ENCODE measurements at regions of chr4 and their contacts with region 1.

Region 1: DNA sequence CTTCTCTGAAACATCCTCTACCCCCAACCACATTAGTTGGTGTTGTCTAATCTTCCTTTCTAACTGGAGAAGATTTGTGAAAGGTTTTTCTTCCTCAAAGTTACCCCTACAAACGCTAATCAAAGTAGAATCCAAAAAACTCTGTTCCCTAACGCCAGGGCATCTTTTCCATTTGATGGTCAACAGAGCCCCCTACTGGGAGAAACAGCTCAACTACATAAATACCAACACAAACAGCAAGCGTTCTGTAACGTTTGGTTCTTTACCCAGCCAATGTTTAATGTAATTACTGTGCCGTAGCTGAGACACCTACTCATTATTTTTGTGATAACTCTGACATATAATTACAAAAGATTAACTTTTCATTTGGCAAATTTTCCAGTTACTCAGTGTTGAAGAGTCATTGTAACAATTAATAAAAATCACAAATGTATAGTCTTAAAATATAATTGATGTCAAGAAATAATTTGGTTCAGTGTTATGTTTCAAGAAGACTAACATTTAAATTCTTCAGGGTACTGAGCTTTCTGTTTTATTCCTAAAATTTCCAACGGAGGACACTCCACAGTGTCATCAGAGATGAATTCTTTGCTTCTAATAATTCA is 94.9 kb upstream of the TBC1D9 start:
- DNase-seq: peak; percentile 83
- ATAC-seq: peak; percentile 82
- H3K4me3 ChIP-seq: no peak overlapping the region
- H3K27ac ChIP-seq: no peak overlapping the region
- H3K4me1 ChIP-seq: no peaks in the 10 kb centered on the region
- H3K27me3 ChIP-seq: no peaks in the 10 kb centered on the region
- CTCF ChIP-seq: peak; percentile 98

Region 2: GRCh38 chr4:140359562-140360427 is 491.3 kb before region 1 on chr4:
- CTCF ChIA-PET with region 1: interaction called, 3 read pairs
- POLR2A ChIA-PET with region 1: no interaction called
- intact Hi-C with region 1: loop called (anchors 2 kb)
- DNase-seq: peak; percentile 86
- ATAC-seq: peak; percentile 95
- H3K4me3 ChIP-seq: no peak overlapping the region
- H3K27ac ChIP-seq: no peak overlapping the region
- H3K4me1 ChIP-seq: no peaks in the 10 kb centered on the region
- H3K27me3 ChIP-seq: no peaks in the 10 kb centered on the region
- CTCF ChIP-seq: peak; percentile 89

Region 3: GRCh38 chr4:140595065-140595464 is 256.1 kb before region 1 on chr4:
- CTCF ChIA-PET with region 1: interaction called, 3 read pairs
- POLR2A ChIA-PET with region 1: no interaction called
- intact Hi-C with region 1: loop called (anchors 1 kb)
- DNase-seq: peak; percentile 61
- ATAC-seq: peak; percentile 96
- H3K4me3 ChIP-seq: no peak overlapping the region
- H3K27ac ChIP-seq: no peak overlapping the region
- H3K4me1 ChIP-seq: no peaks in the 10 kb centered on the region
- H3K27me3 ChIP-seq: peaks cover 12% of the 10 kb centered on the region; the same call in 1 of the 2 replicates
- CTCF ChIP-seq: peak; percentile 66

Region 4: DNA sequence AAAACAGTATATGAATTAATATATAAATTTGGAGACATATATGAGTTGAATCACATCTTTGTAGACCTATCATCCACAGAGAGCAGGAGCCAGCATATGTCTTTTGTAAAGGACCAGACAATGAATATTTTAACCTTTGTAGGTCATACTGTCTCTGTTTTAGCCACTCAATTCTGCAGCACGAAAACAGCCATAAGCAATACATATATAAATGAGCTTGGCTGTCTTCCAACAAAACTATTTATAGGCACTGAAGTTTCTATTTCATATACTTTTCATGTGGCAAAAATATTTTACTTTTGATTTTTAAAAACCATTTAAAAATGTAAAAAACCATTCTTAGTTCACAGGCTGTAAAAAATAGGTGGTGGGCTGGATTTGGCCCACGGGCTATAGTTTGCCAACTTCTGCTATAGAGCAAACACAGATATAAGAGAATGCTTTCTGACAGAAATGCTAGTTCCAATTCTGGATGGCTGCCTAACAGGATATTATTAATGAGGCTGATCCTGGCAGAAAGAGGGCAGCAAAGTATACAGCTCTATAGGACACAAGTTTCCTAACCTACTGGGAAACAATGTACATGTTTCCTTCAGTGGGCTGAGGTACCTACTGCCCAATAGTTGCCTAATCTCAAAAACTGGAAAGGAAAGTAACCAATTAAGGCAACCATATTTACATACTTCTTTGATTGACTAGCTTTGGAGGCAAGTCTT is 224.3 kb before region 1 on chr4:
- CTCF ChIA-PET with region 1: interaction called, 3 read pairs
- POLR2A ChIA-PET with region 1: no interaction called
- intact Hi-C with region 1: loop called (anchors 2 kb)
- DNase-seq: peak; percentile 22
- ATAC-seq: peak; percentile 22; the same call in 1 of the 2 replicates
- H3K4me3 ChIP-seq: no peak overlapping the region
- H3K27ac ChIP-seq: no peak overlapping the region
- H3K4me1 ChIP-seq: peaks cover 14% of the 10 kb centered on the region
- H3K27me3 ChIP-seq: no peaks in the 10 kb centered on the region
- CTCF ChIP-seq: peak; percentile 13; the same call in 1 of the 2 replicates

Region 5: GRCh38 chr4:140743194-140743931 is 107.8 kb before region 1 on chr4:
- CTCF ChIA-PET with region 1: no interaction called
- POLR2A ChIA-PET with region 1: no interaction called
- intact Hi-C with region 1: loop called (anchors 1 kb)
- DNase-seq: peak; percentile 35
- ATAC-seq: peak; percentile 74
- H3K4me3 ChIP-seq: no peak overlapping the region
- H3K27ac ChIP-seq: no peak overlapping the region
- H3K4me1 ChIP-seq: peaks cover 14% of the 10 kb centered on the region
- H3K27me3 ChIP-seq: no peaks in the 10 kb centered on the region
- CTCF ChIP-seq: peak; percentile 56